PC-9 (cell line): ENCODE measurements at regions of chr15 and their contacts with region 1.

Region 1: DNA sequence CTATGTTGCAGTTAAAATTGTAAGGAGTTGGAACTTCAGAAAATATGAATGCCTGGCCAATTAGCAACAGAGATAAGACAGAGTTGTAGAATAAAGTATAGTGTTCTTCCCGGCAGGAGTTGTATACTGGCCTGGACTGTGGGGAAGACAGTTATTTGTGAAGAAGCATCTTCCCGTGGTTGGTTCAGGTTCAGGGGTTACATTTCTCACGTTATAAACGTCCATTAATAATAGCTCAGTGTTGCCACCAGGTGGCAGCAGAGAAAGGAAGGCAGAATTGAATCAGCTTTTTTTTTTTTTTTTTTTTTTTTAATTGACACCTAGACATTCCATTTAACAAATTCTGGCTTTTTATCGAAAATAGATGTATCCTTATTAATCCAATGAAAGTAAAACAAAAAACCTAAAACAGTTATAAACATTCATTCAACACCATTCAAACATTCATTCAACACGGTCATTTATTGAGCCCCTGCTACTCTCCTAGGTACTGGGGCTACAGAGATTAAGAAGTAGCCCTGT is 66.4 kb upstream of the NR2E3 start:
- DNase-seq: peak in 1 of 2 experiments; percentile 37
- H3K4me3 ChIP-seq: no peak overlapping the region
- H3K27ac ChIP-seq: no peak overlapping the region
- H3K4me1 ChIP-seq: peaks cover 29% of the 10 kb centered on the region
- H3K27me3 ChIP-seq: no peaks in the 10 kb centered on the region
- CTCF ChIP-seq: peak; percentile 78

Region 2: DNA sequence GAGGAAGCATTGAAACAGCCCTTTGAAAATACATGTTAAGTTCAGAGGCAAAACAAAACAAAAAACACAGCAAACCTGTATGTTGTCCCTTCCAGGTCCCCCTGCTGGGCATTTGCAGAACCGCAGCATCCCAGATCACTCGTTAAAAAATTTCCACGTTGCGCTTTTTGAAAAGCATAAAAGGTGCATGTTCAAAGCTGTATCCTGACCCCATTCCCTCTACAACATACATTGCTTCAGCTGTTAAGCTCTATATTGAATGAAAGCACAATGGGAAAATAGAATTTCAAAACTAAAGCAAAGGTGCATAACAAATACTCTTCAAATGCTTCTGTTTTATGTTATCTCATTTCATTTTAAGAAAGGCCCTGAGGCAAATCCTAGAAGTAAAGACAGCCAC is 300.4 kb before region 1 on chr15:
- CTCF ChIA-PET with region 1: interaction called, 10 read pairs
- POLR2A ChIA-PET with region 1: interaction called, 28 read pairs
- intact Hi-C with region 1: loop called (anchors 5 kb)
- DNase-seq: peak in 1 of 2 experiments; percentile 45
- H3K4me3 ChIP-seq: no peak overlapping the region
- H3K27ac ChIP-seq: no peak overlapping the region
- H3K4me1 ChIP-seq: peaks cover 63% of the 10 kb centered on the region
- H3K27me3 ChIP-seq: no peaks in the 10 kb centered on the region
- CTCF ChIP-seq: peak; percentile 80

Region 3: GRCh38 chr15:71532994-71533393 is 210.9 kb before region 1 on chr15:
- CTCF ChIA-PET with region 1: interaction called, 5 read pairs
- POLR2A ChIA-PET with region 1: interaction called, 3 read pairs
- intact Hi-C with region 1: loop called (anchors 1 kb)
- DNase-seq: peak; percentile 35 to 37
- H3K4me3 ChIP-seq: no peak overlapping the region
- H3K27ac ChIP-seq: no peak overlapping the region
- H3K4me1 ChIP-seq: 0 out of 2 replicates have a peak, but pooled peaks cover under 1% of the 10 kb centered on the region
- H3K27me3 ChIP-seq: no peaks in the 10 kb centered on the region
- CTCF ChIP-seq: peak; percentile 68

Region 4: GRCh38 chr15:71780115-71780976 is 36.4 kb after region 1 on chr15:
- CTCF ChIA-PET with region 1: interaction called, 16 read pairs
- POLR2A ChIA-PET with region 1: no interaction called
- intact Hi-C with region 1: no loop called
- DNase-seq: peak; percentile 48 to 52
- H3K4me3 ChIP-seq: peak overlapping the region; percentile 37; the same call in 1 of the 2 replicates
- H3K27ac ChIP-seq: peak overlapping the region; percentile 87
- H3K4me1 ChIP-seq: peaks cover 13% of the 10 kb centered on the region
- H3K27me3 ChIP-seq: no peaks in the 10 kb centered on the region
- CTCF ChIP-seq: peak; percentile 79

Region 5: GRCh38 chr15:71826196-71826595 is 82.3 kb after region 1 on chr15:
- CTCF ChIA-PET with region 1: interaction called, 23 read pairs
- POLR2A ChIA-PET with region 1: no interaction called
- intact Hi-C with region 1: no loop called
- DNase-seq: no peak
- H3K4me3 ChIP-seq: no peak overlapping the region
- H3K27ac ChIP-seq: no peak overlapping the region
- H3K4me1 ChIP-seq: no peaks in the 10 kb centered on the region
- H3K27me3 ChIP-seq: no peaks in the 10 kb centered on the region
- CTCF ChIP-seq: no peak

Region 6: GRCh38 chr15:72141171-72142084 is 397.5 kb after region 1 on chr15:
- CTCF ChIA-PET with region 1: no interaction called
- POLR2A ChIA-PET with region 1: no interaction called
- intact Hi-C with region 1: no loop called
- DNase-seq: no peak
- H3K4me3 ChIP-seq: no peak overlapping the region
- H3K27ac ChIP-seq: no peak overlapping the region
- H3K4me1 ChIP-seq: no peaks in the 10 kb centered on the region
- H3K27me3 ChIP-seq: no peaks in the 10 kb centered on the region
- CTCF ChIP-seq: no peak

Region 7: DNA sequence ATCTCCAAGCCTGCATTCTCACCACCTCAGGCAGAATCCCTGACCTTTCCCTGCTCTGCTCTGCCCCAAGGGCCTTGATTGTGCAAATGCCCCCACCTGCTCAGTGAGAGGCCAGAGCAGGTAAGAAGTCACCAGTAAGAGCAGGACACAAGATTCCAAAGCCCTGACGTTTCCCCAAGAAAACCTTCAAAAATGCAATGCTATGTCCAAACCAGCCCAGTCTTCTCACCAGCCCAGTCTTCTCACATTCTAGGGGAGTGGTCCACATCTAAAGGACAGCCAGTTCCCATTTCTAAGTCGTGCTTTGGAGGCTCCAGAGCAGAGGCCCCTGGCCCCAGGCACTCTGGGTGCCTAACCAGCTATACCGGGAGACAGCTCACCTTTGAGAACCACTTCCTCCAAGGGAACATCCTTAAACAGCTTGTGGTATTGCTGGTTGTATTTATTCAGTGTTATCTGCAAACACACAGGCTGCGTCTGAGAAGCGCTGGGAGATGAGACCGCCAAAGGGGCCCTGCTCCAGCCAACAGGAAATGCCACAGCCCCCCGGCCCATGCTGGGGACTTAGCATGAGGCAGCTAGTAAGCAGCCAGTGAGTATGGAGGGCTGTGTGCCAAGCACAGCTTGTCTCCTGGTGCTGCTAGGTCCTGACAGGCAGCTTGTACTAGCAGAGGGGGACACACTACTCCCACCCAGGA is 424.3 kb after region 1 on chr15:
- CTCF ChIA-PET with region 1: interaction called, 10 read pairs
- POLR2A ChIA-PET with region 1: interaction called, 4 read pairs
- intact Hi-C with region 1: no loop called
- DNase-seq: peak; percentile 84 to 97
- H3K4me3 ChIP-seq: peak overlapping the region; percentile 66
- H3K27ac ChIP-seq: peak overlapping the region; percentile 96
- H3K4me1 ChIP-seq: peaks cover 51% of the 10 kb centered on the region
- H3K27me3 ChIP-seq: no peaks in the 10 kb centered on the region
- CTCF ChIP-seq: no peak